Mammary epithelial cell (primary cell): ENCODE measurements at regions of chr13 and their contacts with region 1.

Region 1: DNA sequence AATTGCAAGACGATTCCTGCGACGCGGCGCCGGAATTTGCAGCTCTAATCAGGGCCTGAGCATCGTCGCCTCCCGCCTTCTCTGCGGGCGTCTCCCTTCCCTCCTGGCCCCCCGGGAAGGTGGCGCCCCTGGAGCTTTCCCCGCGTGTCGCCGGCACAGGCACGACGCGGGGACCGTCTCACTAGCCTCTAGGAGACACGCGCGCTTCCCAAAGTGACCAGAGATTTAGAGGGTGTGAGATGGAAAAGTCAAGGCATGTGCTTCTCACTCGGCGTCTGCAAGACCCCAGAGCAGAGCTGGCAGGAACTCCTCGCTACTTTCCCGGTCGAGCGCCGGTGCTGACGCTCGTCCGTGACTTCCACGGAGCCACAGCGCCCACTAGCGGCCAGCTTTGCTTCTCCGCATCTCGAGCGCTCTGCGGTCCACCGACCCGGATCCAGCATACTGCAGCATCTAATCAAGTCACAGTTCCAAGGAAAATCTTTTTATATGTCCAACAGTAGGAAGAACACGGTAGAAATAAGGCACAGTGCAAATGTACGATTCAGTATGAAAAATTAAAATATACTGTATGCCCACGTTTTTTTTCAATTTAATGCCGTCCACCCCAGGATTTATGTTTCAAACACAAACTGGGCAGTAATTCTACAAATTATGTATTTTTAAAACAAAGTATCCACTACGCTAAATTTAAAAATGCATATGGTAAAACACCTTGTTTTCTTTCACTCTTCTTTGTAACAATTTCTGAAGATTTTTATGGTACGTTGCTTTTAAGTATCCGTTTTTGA is 977 bp upstream of the EFNB2 start:
- DNase-seq: peak; percentile 73
- H3K4me3 ChIP-seq: peak overlapping the region; percentile 61 to 65 (median 63)
- H3K27ac ChIP-seq: peak overlapping the region; percentile 45
- H3K4me1 ChIP-seq: peaks cover 11% of the 10 kb centered on the region
- H3K27me3 ChIP-seq: no peaks in the 10 kb centered on the region
- CTCF ChIP-seq: peak; percentile 93 to 99

Region 2: GRCh38 chr13:105365831-105366230 is 1170.6 kb before region 1 on chr13:
- CTCF ChIA-PET with region 1: interaction called, 19 read pairs
- dilution Hi-C with region 1: no loop called
- in situ Hi-C with region 1: no loop called
- intact Hi-C with region 1: no loop called
- DNase-seq: peak; percentile 17
- H3K4me3 ChIP-seq: no peak overlapping the region
- H3K27ac ChIP-seq: no peak overlapping the region
- H3K4me1 ChIP-seq: no peaks in the 10 kb centered on the region
- H3K27me3 ChIP-seq: no peaks in the 10 kb centered on the region
- CTCF ChIP-seq: no peak

Region 3: GRCh38 chr13:105518086-105518485 is 1018.4 kb before region 1 on chr13:
- CTCF ChIA-PET with region 1: no interaction called
- dilution Hi-C with region 1: no loop called
- in situ Hi-C with region 1: no loop called
- intact Hi-C with region 1: loop called (anchors 10 kb)
- DNase-seq: no peak
- H3K4me3 ChIP-seq: no peak overlapping the region
- H3K27ac ChIP-seq: no peak overlapping the region
- H3K4me1 ChIP-seq: no peaks in the 10 kb centered on the region
- H3K27me3 ChIP-seq: no peaks in the 10 kb centered on the region
- CTCF ChIP-seq: no peak

Region 4: DNA sequence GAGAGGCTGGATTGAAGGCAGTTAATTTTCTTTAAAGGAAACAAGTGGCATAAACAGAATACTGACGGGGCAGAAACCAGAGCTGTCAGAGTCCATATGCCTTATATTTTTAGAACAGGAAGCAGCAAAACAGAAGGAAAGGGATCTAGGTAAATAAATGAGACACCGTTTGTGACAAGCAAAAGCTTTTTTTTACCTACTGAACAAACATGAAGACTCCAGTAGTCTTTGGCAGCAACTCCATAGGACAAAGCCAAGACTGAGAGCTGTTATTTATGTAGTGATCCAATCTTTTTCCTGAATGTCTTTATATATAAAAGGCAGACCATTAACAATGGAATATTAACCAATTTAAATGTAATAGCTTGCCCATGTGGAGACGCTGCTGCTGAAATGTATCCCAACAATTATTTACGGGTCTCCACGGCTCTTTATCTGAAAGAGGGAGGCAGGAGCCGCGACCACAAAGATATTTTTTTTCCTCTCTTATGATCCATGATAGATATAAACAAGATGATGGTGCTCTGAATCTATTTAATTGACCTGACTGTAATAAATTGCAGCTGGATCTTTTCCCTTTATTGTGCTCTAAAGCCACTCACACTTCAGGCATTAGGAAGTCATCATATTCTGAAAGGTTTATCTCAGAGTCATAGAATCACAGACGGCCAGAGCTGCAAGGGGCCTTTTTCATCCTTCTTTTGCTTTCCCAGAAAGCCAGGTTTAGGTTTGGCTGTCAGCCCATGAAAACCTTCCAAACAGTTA is 688.7 kb before region 1 on chr13:
- CTCF ChIA-PET with region 1: no interaction called
- dilution Hi-C with region 1: no loop called
- in situ Hi-C with region 1: no loop called
- intact Hi-C with region 1: loop called (anchors 10 kb)
- DNase-seq: no peak
- H3K4me3 ChIP-seq: no peak overlapping the region
- H3K27ac ChIP-seq: no peak overlapping the region
- H3K4me1 ChIP-seq: peaks cover 13% of the 10 kb centered on the region
- H3K27me3 ChIP-seq: no peaks in the 10 kb centered on the region
- CTCF ChIP-seq: no peak

Region 5: DNA sequence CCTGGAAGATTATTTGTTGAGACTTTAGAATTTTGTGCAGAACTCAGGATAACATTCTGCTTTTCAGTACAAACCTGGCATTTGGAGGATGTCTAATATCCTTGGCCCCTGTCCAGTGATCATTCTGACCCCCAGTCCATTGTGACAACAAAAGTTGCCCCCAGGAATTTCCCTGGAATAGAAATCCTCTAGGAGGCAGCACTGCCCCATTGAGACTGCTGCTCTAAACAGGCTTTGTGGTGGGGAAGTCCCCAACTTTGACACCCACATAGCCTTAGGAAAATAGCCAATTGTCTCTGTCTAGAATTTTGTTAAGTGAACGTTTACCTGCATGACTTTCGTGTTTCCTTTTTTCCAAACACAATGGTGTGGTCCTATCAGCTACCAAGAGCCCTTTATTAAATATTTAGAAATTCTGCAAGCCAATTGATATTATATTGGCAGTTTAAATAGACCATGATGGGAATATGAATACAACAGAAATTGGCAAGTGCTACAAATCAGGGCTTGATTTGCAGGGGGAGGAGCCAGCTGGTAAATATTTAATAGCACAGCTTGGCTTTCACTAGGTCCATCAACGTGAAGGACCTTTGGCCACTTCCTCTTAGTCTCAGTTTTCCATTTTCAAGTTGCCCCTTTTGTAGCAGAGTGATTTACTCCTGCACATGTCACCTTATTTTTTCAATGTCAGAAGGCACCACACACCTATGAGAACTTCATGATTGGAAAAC is 452.7 kb before region 1 on chr13:
- CTCF ChIA-PET with region 1: no interaction called
- dilution Hi-C with region 1: no loop called
- in situ Hi-C with region 1: no loop called
- intact Hi-C with region 1: loop called (anchors 1 kb)
- DNase-seq: peak; percentile 71
- H3K4me3 ChIP-seq: no peak overlapping the region
- H3K27ac ChIP-seq: peak overlapping the region; percentile 14
- H3K4me1 ChIP-seq: peaks cover 6% of the 10 kb centered on the region
- H3K27me3 ChIP-seq: no peaks in the 10 kb centered on the region
- CTCF ChIP-seq: peak; percentile 87 to 90

Region 6: DNA sequence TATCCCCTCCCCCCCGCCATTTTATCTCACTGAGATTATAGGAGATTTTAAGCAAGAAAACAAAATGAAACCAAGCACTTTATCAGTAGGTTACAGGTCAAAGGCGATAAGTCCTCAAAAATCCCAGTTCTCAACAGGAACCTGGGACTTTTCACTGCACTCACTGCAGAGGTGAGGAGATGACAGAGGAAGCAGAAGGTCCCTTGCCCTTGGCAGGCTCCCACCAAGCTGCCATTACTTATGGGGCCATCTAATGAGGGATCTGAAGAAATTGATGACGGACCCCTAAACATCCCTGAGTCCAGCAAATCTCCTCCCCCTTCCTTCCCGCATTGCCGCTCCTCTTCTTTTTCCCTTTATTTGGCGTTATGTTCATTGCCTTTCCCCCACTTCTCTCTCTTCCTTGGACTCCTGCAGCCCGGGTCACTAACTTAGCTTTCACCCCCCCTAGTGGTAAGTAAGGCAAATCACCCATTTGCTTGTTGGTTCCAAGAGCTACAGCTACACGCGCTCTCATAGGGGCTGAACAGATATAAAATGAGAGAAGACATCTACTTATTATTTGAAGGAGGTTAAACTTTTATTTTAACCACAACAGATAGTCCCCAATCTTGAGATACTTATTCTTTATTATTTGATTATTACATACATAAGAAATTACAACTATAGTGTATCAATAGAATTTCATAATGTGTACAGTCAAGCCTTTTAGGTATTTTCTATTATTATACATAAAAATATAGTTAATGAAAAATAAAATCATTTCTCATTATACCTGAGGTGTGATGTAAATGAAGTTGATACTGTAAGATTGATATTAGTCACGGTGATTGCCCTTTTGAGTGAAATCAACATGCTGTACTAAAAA is 83.5 kb after region 1 on chr13:
- CTCF ChIA-PET with region 1: interaction called, 6 read pairs
- dilution Hi-C with region 1: no loop called
- in situ Hi-C with region 1: no loop called
- intact Hi-C with region 1: loop called (anchors 1 kb)
- DNase-seq: peak; percentile 49
- H3K4me3 ChIP-seq: no peak overlapping the region
- H3K27ac ChIP-seq: no peak overlapping the region
- H3K4me1 ChIP-seq: no peaks in the 10 kb centered on the region
- H3K27me3 ChIP-seq: peaks cover 2% of the 10 kb centered on the region
- CTCF ChIP-seq: peak; percentile 82 to 89